Activated CD4-positive, alpha-beta T cell treated with anti-CD3 and anti-CD28 coated beads, Interleukin-2, amount 10 ng/mL, durations not matched to agents 24 days and 14 days (primary cell): ENCODE measurements at regions of chr10 and their contacts with region 1.

Region 1: DNA sequence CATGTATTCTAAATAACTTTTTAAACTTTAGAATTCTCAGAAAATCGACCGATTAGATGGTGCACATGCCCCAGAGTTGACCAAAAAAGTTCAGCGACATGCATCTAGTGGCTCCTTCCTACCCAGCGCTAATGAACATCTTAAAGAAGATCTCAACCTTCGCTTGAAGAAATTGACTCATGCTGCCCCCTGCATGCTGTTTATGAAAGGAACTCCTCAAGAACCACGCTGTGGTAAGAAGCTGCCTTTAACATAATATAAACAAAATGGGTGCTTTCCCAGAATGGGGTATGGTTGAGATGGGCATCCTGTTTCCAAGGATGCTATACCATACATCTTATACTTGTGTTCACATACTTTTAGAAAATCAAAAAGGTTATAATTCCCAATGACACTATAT is 24.6 kb downstream of the GLRX3 start:
- DNase-seq: peak; percentile 76
- H3K4me3 Mint-ChIP-seq: no peak overlapping the region
- H3K27ac Mint-ChIP-seq: no peak overlapping the region
- H3K4me1 Mint-ChIP-seq: peaks cover 21% of the 10 kb centered on the region
- H3K27me3 Mint-ChIP-seq: no peaks in the 10 kb centered on the region

Region 2: DNA sequence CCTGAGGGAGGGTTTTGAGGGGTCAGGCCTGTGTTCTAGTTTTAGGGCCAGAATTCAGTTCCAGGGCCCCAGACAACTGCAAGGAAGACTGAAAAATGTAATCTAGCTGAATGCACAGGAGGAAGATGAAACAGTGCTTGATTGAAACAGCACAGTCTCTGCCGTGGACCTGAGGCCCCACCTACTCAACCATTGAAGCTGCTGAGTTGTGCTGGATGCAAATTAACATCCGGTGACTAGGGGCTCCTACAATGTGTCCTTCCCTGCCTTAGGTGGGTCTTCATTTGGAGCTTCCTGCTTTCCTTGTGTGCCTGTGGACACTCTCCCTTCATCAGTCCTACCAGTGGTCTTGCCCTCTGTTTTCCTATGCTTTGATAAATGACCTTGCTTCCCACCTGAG is 18.9 kb before region 1 on chr10:
- intact Hi-C with region 1: loop called (anchors 2 kb)
- DNase-seq: peak; percentile 70
- H3K4me3 Mint-ChIP-seq: peak overlapping the region; percentile 57
- H3K27ac Mint-ChIP-seq: peak overlapping the region; percentile 63
- H3K4me1 Mint-ChIP-seq: peaks cover 50% of the 10 kb centered on the region
- H3K27me3 Mint-ChIP-seq: no peaks in the 10 kb centered on the region